ENCODE measurements at regions of chr15 and their contacts with region 1.

Region 1: DNA sequence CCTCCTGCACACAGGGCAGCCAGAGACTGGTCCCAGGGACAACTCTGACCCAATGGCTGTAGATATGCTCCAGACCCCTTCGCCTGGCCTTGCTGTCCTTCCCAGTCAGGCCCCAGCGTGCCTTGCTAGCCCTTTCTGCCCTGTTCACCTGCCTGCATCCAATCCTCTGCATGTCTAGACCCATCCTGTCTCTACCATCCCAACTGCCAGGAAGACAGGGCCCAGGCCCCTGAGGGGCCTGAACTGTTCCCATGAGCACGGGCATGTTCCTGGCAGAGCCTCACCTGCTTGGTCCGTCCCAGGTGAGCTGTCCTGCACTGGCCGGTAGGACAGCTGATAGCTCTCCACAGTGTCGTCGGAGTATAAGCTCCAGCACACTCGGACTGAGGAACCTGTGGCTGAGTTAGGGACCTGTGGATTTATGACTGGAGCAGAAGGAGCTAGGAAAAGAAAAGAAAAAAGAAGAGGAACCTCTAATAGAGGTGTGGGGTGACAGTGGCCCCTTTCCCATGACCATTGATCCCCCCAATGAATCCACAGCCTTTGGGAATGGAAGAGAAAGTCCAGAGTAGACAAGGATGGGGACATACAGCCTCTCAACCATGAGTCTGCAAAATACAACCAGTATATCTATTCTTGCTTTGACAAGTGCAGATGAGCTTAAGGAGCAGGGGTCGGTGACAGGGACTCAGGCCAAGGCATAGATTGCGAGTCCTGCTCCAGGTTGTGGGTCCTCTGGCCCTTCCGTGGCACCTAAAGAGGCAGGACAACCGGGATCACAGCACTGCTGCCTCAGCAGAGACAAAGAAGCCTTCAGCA is 33.9 kb downstream of the FSD2 start:
- DNase-seq: no peak
- ATAC-seq: no peak

Region 2: GRCh38 chr15:82714026-82714425 is 58.0 kb before region 1 on chr15:
- intact Hi-C with region 1: no loop called
- DNase-seq: no peak
- ATAC-seq: no peak

Region 3: DNA sequence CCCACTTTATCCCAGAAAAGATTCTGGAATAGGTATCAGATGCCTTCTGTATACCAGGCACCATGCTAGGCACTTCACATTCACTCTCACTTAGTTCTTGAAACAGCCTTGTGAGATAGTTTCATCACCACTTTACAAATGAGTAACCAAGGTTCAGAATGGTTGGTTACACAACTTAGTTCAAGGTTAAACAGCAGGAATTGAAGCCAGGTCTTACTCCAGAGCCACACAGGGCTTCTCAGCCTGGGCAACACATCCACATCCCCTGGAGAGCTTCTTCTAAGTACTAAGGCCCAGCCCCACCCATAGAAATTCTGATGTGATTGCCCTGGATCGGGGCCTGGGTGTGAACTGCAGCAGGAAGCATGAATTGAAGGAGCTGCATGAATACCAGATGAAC is 56.1 kb after region 1 on chr15:
- intact Hi-C with region 1: loop called in 1 of 2 experiments (anchors 10 kb)
- DNase-seq: no peak
- ATAC-seq: no peak